ENCODE measurements at regions of chr5 and their contacts with region 1.

Region 1: GRCh38 chr5:170070556-170071412 is 34.9 kb upstream of the FOXI1 start:
- DNase-seq: peak; percentile 17 to 90
- H3K4me3 ChIP-seq: no peak overlapping the region
- H3K27ac ChIP-seq: no peak overlapping the region
- H3K4me1 ChIP-seq: no peaks in the 10 kb centered on the region
- H3K27me3 ChIP-seq: no peaks in the 10 kb centered on the region; a peak in 1 of 7 replicates
- CTCF ChIP-seq: peak; percentile 74 to 82 (median 81)
- EP300 ChIP-seq: no peak
- POLR2A ChIP-seq: no peak
- RAD21 ChIP-seq: peak; percentile 72 to 78

Region 2: GRCh38 chr5:169701910-169702451 is 368.8 kb before region 1 on chr5:
- CTCF ChIA-PET with region 1: interaction called, 14 read pairs
- POLR2A ChIA-PET with region 1: no interaction called
- DNase-seq: no peak
- H3K4me3 ChIP-seq: no peak overlapping the region
- H3K27ac ChIP-seq: no peak overlapping the region
- H3K4me1 ChIP-seq: no peaks in the 10 kb centered on the region
- H3K27me3 ChIP-seq: no peaks in the 10 kb centered on the region
- CTCF ChIP-seq: peak in 2 of 3 experiments; percentile 31 to 54; a peak in 2 of 4 replicates
- EP300 ChIP-seq: no peak
- POLR2A ChIP-seq: no peak
- RAD21 ChIP-seq: peak; percentile 66 to 74

Region 3: GRCh38 chr5:170017772-170018171 is 53.0 kb before region 1 on chr5:
- CTCF ChIA-PET with region 1: interaction called, 13 read pairs
- POLR2A ChIA-PET with region 1: no interaction called
- DNase-seq: no peak
- H3K4me3 ChIP-seq: no peak overlapping the region
- H3K27ac ChIP-seq: no peak overlapping the region
- H3K4me1 ChIP-seq: no peaks in the 10 kb centered on the region
- H3K27me3 ChIP-seq: no peaks in the 10 kb centered on the region; a peak in 1 of 7 replicates
- CTCF ChIP-seq: no peak
- EP300 ChIP-seq: no peak
- POLR2A ChIP-seq: no peak
- RAD21 ChIP-seq: no peak

Region 4: GRCh38 chr5:170056561-170057267 is 14.1 kb before region 1 on chr5:
- CTCF ChIA-PET with region 1: interaction called, 19 read pairs
- POLR2A ChIA-PET with region 1: interaction called, 4 read pairs
- DNase-seq: no peak
- H3K4me3 ChIP-seq: no peak overlapping the region
- H3K27ac ChIP-seq: no peak overlapping the region
- H3K4me1 ChIP-seq: no peaks in the 10 kb centered on the region
- H3K27me3 ChIP-seq: no peaks in the 10 kb centered on the region
- CTCF ChIP-seq: no peak
- EP300 ChIP-seq: no peak
- POLR2A ChIP-seq: no peak
- RAD21 ChIP-seq: no peak

Region 5: DNA sequence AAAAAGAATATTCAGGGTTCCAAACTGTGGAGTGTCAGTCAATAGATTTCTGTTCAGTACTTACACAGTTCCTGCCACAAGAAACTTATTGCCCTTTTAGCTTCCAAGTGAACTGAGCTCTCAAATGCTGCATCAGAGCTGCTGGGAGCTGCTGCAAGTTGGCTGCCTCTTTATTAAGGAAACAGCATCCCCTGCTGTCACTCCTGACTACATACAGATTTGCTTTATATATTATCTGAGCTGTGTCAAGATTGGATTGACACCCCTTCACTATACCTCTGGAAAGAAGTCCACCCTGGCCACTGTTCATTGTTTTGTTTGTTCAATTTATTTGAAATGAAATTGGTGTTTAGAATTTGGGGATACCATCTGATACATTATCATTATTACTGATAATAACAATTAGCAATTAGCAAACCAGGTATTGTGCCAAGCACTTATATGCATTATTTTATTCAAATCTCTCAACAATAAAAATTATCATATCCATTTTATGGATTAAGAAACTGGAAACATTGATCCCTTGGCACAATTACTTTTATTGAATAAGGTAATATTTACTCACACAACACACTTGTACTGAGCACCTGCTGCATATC is 145.6 kb after region 1 on chr5:
- CTCF ChIA-PET with region 1: interaction called, 14 read pairs
- POLR2A ChIA-PET with region 1: no interaction called
- DNase-seq: no peak
- H3K4me3 ChIP-seq: no peak overlapping the region
- H3K27ac ChIP-seq: no peak overlapping the region
- H3K4me1 ChIP-seq: peaks cover 0 to 6% (median 1%) of the 10 kb centered on the region in 4 experiments; a peak in 2 of 7 replicates
- H3K27me3 ChIP-seq: peaks cover 0 to 19% (median 5%) of the 10 kb centered on the region in 4 experiments; a peak in 5 of 7 replicates
- CTCF ChIP-seq: peak; percentile 22 to 83 (median 76)
- EP300 ChIP-seq: no peak
- POLR2A ChIP-seq: no peak
- RAD21 ChIP-seq: peak; percentile 97

Region 6: GRCh38 chr5:170420780-170421412 is 350.1 kb after region 1 on chr5:
- CTCF ChIA-PET with region 1: no interaction called
- POLR2A ChIA-PET with region 1: no interaction called
- DNase-seq: peak in 1 of 2 experiments; percentile 72
- H3K4me3 ChIP-seq: no peak overlapping the region
- H3K27ac ChIP-seq: no peak overlapping the region
- H3K4me1 ChIP-seq: peaks cover 0 to 2% (median 0%) of the 10 kb centered on the region in 4 experiments; a peak in 2 of 7 replicates
- H3K27me3 ChIP-seq: no peaks in the 10 kb centered on the region
- CTCF ChIP-seq: peak; percentile 51 to 89 (median 87)
- EP300 ChIP-seq: no peak
- POLR2A ChIP-seq: no peak
- RAD21 ChIP-seq: peak; percentile 82 to 85